ENCODE measurements at regions of chr19 and their contacts with region 1.

Region 1: DNA sequence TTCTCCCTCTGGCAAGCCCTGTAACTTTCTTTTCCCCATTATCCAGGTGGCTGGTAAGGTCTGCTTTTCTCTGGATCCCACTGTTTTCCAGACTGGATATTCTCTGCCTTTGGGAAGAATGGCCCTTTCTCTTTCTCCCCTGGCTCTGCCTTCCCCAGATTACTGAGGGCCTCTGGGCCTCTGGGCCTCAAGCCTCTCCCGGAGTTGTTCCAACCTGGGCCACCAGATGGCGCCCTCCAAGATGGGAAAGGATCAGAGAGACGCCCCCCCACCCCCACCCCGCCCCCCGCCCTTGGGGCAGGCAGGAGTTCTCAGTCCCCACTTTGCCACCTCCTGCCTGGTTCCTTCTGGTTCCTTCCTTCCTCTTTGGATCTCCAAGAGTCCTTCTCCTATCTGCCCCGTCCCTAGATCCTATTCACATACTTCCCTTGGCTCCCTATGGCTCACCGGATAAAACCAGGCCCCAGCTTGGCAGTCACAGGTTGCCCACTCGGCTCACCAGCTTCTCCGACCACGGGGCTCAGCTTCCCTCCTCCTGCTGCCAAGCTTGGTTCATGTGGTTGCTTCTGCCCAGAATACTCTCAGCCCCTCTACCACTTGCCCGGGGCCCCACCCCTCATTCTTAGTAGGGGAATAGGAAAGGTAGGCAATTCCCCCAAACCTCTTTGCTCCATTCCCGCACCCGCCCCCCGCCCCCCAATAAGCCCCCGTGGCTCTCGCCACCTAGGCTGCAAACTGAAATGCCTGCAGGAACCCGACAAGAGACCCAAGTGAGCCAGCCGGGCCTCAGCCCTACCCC is 13.1 kb downstream of the EPS8L1 start:
- DNase-seq: peak; percentile 79 to 82
- H3K4me3 ChIP-seq: no peak overlapping the region
- H3K27ac ChIP-seq: peak overlapping the region in 1 of 2 donors; percentile 41
- H3K4me1 ChIP-seq: peaks cover 0 to 9% of the 10 kb centered on the region in 2 donors
- H3K27me3 ChIP-seq: peaks cover 0 to 7% of the 10 kb centered on the region in 2 donors
- CTCF ChIP-seq: peak; percentile 42 to 89 (median 73)
- POLR2A ChIP-seq: no peak

Region 2: GRCh38 chr19:55053735-55054134 is 35.0 kb before region 1 on chr19:
- intact Hi-C with region 1: no loop called
- DNase-seq: no peak
- H3K4me3 ChIP-seq: no peak overlapping the region
- H3K27ac ChIP-seq: no peak overlapping the region
- H3K4me1 ChIP-seq: no peaks in the 10 kb centered on the region
- H3K27me3 ChIP-seq: no peaks in the 10 kb centered on the region
- CTCF ChIP-seq: no peak
- POLR2A ChIP-seq: no peak

Region 3: GRCh38 chr19:55241143-55242088 is 152.7 kb after region 1 on chr19:
- intact Hi-C with region 1: no loop called
- DNase-seq: no peak
- H3K4me3 ChIP-seq: no peak overlapping the region
- H3K27ac ChIP-seq: no peak overlapping the region
- H3K4me1 ChIP-seq: no peaks in the 10 kb centered on the region
- H3K27me3 ChIP-seq: no peaks in the 10 kb centered on the region
- CTCF ChIP-seq: no peak
- POLR2A ChIP-seq: no peak

Region 4: DNA sequence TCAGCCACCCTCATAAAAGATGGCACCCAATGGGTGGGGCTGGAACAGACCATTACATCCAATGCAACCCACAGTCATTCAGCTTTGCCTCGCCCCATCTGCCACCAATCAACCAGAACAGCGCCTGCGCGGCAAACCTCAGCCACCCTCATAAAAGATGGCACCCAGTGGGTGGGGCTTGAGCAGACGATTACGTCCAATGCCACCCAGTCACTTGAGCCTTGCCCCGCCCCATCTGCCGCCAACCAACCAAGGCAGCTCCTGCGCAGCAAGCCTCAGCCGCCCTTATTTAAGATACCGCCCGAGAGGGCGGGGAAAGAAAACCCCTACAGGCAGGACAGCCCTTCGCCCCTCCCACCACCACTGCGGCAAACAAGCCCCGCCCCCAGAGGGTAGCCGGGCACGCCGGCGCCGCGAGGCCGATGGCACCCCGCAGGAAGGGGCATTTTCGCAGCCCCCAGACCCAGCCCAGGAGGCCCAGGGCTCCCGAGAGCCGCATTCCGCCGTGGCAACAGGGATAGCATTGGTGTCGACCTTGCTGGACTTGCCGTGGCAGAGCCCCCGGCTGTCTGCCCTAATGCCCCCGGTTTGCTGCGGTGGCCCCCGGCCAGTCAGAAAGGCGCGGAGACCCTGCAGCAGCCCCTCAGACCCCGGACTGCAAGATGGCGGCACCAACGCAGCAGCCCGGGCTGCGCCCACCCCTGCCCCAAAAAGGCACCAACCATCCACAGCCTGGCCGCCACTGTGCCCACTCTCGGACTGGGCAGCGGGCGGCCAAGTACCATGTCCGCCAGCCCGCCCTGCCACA is 1751.1 kb after region 1 on chr19:
- intact Hi-C with region 1: loop called (anchors 10 kb)
- DNase-seq: peak; percentile 93 to 98
- H3K4me3 ChIP-seq: peak overlapping the region; percentile 57 to 64
- H3K27ac ChIP-seq: peak overlapping the region; percentile 85 to 89
- H3K4me1 ChIP-seq: no peaks in the 10 kb centered on the region
- H3K27me3 ChIP-seq: no peaks in the 10 kb centered on the region
- CTCF ChIP-seq: no peak
- POLR2A ChIP-seq: peak; percentile 11 to 19